ENCODE measurements at regions of chr11 and their contacts with region 1.

Region 1: GRCh38 chr11:45964911-45965389 is 42.5 kb downstream of the LARGE2 start:
- DNase-seq: peak; percentile 44 to 70
- H3K4me3 ChIP-seq: no peak overlapping the region
- H3K27ac ChIP-seq: no peak overlapping the region
- H3K4me1 ChIP-seq: peaks cover 0 to 3% (median 0%) of the 10 kb centered on the region in 4 experiments; a peak in 2 of 7 replicates
- H3K27me3 ChIP-seq: no peaks in the 10 kb centered on the region
- CTCF ChIP-seq: peak; percentile 78 to 93 (median 86)
- EP300 ChIP-seq: no peak
- POLR2A ChIP-seq: no peak
- RAD21 ChIP-seq: peak; percentile 88 to 91

Region 2: DNA sequence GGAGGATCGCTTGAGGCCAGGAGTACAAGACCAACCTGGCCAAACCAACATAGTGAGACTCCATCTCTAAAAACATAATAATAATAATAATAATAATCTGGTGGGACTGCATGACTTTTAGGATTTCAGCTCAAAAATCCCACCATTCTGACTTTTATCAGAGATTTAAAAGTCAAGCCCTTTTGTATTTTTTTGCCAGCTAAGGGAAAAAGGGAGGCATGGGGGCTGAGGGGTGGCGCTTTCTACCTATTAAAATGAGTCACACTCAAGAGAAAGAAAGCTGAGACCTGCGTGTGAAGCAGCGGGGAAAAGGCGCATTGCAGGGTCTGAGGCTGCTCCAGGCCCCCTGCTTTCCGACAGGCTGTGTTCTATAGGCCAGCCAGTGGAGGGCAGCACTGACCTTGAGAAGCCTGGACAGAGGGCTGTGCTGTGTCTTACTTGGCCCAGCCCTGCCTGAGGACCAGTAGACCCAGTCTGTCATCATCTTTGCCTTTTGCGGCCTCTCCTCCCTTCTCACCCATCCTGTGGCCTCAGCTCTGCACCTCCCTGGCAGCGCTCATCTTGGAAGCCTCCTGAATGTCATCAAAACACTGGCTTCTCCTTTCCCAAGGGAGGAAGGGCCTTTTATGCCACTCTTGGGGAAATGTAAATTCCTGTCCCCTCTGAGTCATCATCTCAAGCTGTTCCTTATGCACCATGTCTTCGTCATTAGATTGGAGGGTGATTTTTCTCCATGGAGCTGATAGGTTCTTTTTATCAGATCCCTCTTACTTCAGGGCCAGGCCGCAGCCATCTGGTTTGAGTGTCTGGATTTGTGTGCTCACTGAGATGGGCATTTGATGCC is 92.2 kb before region 1 on chr11:
- CTCF ChIA-PET with region 1: interaction called, 36 read pairs
- POLR2A ChIA-PET with region 1: no interaction called
- DNase-seq: peak; percentile 73 to 86
- H3K4me3 ChIP-seq: no peak overlapping the region
- H3K27ac ChIP-seq: no peak overlapping the region
- H3K4me1 ChIP-seq: peaks cover 9 to 16% (median 13%) of the 10 kb centered on the region in 4 experiments; a peak in 6 of 7 replicates
- H3K27me3 ChIP-seq: no peaks in the 10 kb centered on the region
- CTCF ChIP-seq: peak; percentile 92 to 98 (median 95)
- EP300 ChIP-seq: no peak
- POLR2A ChIP-seq: no peak
- RAD21 ChIP-seq: peak; percentile 96 to 97

Region 3: DNA sequence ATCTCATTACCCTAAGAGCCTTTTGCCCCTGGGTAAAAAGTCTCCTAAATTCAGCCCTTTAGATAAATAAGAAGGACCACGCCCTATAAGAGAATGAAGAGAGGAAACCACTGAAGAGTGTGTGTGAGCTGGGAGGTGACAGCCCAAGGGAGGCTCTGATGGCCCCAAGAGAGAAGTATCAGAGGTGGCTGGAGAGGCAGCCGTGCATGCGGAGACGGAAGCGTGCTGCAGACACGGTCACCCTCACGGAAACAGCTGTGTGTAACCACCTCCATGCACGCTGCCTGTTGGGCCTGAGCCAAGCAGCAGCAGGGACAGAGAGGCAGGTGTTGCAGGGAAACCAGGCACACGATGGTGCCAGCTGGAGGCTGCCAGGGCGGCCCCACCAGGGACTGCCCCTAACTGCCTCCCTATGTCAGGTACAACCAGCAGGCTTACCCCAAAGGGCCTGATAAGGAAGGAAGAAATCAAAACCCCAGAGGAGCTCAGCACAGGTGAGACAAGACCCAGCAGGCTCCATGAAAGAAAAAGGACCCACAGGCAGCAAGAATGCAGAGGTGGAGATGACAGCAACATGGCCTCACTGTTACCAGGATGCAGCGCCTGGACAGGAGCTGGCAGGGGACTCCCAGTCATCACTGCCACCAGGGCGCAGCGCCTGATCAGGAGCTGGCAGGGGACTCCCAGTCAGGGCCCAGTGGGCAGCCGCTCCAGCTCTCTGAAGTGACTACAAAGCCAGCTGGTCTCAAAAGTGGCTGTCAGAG is 34.7 kb before region 1 on chr11:
- CTCF ChIA-PET with region 1: interaction called, 12 read pairs
- POLR2A ChIA-PET with region 1: interaction called, 3 read pairs
- DNase-seq: no peak
- H3K4me3 ChIP-seq: no peak overlapping the region
- H3K27ac ChIP-seq: no peak overlapping the region
- H3K4me1 ChIP-seq: no peaks in the 10 kb centered on the region
- H3K27me3 ChIP-seq: no peaks in the 10 kb centered on the region
- CTCF ChIP-seq: no peak
- EP300 ChIP-seq: no peak
- POLR2A ChIP-seq: no peak
- RAD21 ChIP-seq: peak; percentile 6 to 35; a peak in 2 of 4 replicates

Region 4: GRCh38 chr11:45949992-45950407 is 14.9 kb before region 1 on chr11:
- CTCF ChIA-PET with region 1: interaction called, 23 read pairs
- POLR2A ChIA-PET with region 1: interaction called, 3 read pairs
- DNase-seq: no peak
- H3K4me3 ChIP-seq: no peak overlapping the region
- H3K27ac ChIP-seq: no peak overlapping the region
- H3K4me1 ChIP-seq: no peaks in the 10 kb centered on the region
- H3K27me3 ChIP-seq: no peaks in the 10 kb centered on the region
- CTCF ChIP-seq: no peak
- EP300 ChIP-seq: no peak
- POLR2A ChIP-seq: no peak
- RAD21 ChIP-seq: no peak

Region 5: GRCh38 chr11:45993531-45994001 is 28.6 kb after region 1 on chr11:
- CTCF ChIA-PET with region 1: interaction called, 101 read pairs
- POLR2A ChIA-PET with region 1: interaction called, 5 read pairs
- DNase-seq: no peak
- H3K4me3 ChIP-seq: no peak overlapping the region
- H3K27ac ChIP-seq: no peak overlapping the region
- H3K4me1 ChIP-seq: peaks cover 18 to 38% (median 29%) of the 10 kb centered on the region in 4 experiments; a peak in 6 of 7 replicates
- H3K27me3 ChIP-seq: no peaks in the 10 kb centered on the region
- CTCF ChIP-seq: no peak
- EP300 ChIP-seq: no peak
- POLR2A ChIP-seq: no peak
- RAD21 ChIP-seq: no peak

Region 6: DNA sequence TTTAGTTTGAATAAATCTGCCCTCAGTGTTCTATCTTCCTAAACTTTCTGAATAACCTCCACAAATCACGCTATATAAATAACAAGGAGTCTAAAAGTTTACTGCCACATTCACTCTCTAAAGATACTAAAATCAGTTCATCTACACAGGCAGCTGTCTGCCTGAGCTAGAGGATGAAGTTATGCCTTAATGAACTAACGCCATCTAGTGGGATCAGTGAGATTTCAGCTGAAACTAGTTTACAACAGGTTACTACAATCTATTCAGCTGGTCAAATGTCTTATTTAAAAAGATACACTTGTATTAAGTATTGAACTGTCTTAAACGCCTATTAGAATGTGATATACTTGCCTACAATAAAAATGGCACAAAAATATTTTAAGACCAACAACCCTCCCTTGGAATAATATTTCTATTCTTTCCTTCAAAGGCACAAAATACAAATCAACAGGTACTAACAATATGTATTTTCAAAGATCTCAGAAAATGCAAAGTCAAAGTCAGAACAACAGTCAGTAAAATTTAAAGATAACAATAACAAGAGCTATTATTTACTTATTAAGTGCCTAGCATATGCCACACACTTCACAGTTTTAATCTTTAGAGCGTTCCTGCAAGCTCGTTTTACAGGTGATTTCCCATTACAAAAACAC is 41.6 kb after region 1 on chr11:
- CTCF ChIA-PET with region 1: interaction called, 107 read pairs
- POLR2A ChIA-PET with region 1: interaction called, 10 read pairs
- DNase-seq: no peak
- H3K4me3 ChIP-seq: no peak overlapping the region
- H3K27ac ChIP-seq: no peak overlapping the region
- H3K4me1 ChIP-seq: peaks cover 0 to 6% (median 2%) of the 10 kb centered on the region in 4 experiments; a peak in 2 of 7 replicates
- H3K27me3 ChIP-seq: no peaks in the 10 kb centered on the region
- CTCF ChIP-seq: peak in 2 of 3 experiments; percentile 77 to 79; a peak in 3 of 4 replicates
- EP300 ChIP-seq: no peak
- POLR2A ChIP-seq: no peak
- RAD21 ChIP-seq: peak; percentile 89 to 95

Region 7: DNA sequence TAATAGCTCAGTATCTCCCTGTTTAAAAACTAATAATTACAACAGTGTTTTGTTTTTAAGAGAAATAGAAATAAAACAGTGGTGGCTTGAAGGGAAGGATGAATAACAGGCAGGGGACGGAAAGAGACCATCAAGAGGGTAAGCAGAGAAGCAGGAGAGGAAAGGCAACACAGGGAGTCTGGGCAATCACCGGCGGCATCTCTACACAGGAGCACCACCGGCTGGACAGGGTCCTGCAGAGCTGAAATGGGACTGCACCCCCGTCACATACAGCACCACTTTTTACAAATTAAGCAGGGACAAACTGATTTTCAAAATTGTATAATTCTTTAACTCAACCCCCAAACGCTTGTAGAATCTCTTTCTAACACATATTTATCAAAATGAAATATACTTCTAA is 137.9 kb after region 1 on chr11:
- CTCF ChIA-PET with region 1: interaction called, 11 read pairs
- POLR2A ChIA-PET with region 1: no interaction called
- DNase-seq: no peak
- H3K4me3 ChIP-seq: no peak overlapping the region
- H3K27ac ChIP-seq: no peak overlapping the region
- H3K4me1 ChIP-seq: peaks cover 2 to 8% (median 6%) of the 10 kb centered on the region in 4 experiments; a peak in 6 of 7 replicates
- H3K27me3 ChIP-seq: no peaks in the 10 kb centered on the region
- CTCF ChIP-seq: no peak
- EP300 ChIP-seq: no peak
- POLR2A ChIP-seq: no peak
- RAD21 ChIP-seq: no peak; a peak in 1 of 4 replicates

Measured in H1 (cell line).